ENCODE measurements at regions of chr4 and their contacts with region 1.

Region 1: DNA sequence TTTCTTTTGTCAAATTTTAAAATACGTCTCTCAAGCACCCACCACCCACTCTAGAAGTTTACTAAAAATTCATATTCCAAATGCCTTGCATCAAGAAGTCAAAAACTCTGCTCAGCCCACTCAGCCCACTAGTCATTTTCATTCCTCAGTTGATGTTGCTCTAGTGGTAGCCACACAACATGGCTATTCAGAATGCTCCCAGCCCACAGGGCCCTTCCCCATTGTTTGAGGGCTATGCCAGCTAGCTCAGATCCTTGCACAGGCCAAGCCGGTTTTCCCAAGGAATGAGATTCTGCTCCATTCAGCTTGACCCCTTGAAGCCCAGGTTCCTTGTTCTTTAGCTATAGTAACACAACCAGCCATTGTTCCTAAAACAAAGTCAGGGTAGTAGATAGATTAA is 297.5 kb upstream of the RASGEF1B start:
- DNase-seq: no peak
- H3K4me3 ChIP-seq: no peak overlapping the region
- H3K27ac ChIP-seq: no peak overlapping the region
- H3K4me1 ChIP-seq: no peaks in the 10 kb centered on the region
- H3K27me3 ChIP-seq: no peaks in the 10 kb centered on the region
- CTCF ChIP-seq: no peak
- EP300 ChIP-seq: no peak
- POLR2A ChIP-seq: no peak

Region 2: DNA sequence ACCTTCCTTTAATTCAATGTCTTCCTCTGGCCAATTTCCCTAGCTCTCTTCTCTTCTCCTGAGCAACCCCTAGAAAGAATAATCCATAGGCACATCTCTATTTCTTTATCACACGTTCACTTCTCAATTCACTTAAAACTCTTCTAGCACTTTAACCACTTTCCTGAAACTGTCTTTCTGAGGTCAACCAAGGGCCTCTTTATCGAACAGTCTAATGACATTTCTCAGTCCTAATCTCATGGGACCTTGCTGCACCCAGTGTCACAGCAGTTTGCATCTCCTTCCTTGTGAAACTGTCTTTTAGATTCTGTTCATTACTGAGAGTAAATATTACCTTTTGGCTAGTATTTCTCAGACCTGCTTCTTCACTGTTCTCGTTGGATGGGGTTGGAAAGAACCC is 12.3 kb before region 1 on chr4:
- in situ Hi-C with region 1: no loop called
- intact Hi-C with region 1: no loop called
- DNase-seq: no peak
- H3K4me3 ChIP-seq: no peak overlapping the region
- H3K27ac ChIP-seq: no peak overlapping the region
- H3K4me1 ChIP-seq: no peaks in the 10 kb centered on the region
- H3K27me3 ChIP-seq: no peaks in the 10 kb centered on the region
- CTCF ChIP-seq: no peak
- EP300 ChIP-seq: no peak
- POLR2A ChIP-seq: no peak

Region 3: DNA sequence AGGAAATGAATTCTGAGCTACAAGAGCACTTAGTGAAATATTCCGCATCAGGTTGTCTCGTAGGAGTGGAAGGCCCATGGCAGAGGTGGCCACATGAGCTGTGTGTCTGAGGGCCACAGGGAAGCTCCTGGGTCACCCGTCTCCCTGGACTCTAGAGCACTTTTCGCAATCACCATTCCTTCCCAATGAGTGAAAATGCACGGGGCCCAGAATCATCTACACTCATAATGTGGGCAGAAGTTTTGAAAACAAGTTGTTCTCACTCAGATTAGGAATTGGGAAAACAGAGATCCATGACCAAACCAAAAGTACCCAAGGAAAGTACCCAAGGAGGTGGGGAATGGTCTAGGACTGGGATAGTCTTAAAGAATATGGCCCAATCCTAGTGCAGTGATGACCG is 934.9 kb after region 1 on chr4:
- in situ Hi-C with region 1: no loop called
- intact Hi-C with region 1: no loop called
- DNase-seq: no peak
- H3K4me3 ChIP-seq: no peak overlapping the region
- H3K27ac ChIP-seq: no peak overlapping the region
- H3K4me1 ChIP-seq: peaks cover 0 to 9% (median 0%) of the 10 kb centered on the region in 4 donors
- H3K27me3 ChIP-seq: no peaks in the 10 kb centered on the region
- CTCF ChIP-seq: no peak
- EP300 ChIP-seq: no peak
- POLR2A ChIP-seq: no peak

Region 4: DNA sequence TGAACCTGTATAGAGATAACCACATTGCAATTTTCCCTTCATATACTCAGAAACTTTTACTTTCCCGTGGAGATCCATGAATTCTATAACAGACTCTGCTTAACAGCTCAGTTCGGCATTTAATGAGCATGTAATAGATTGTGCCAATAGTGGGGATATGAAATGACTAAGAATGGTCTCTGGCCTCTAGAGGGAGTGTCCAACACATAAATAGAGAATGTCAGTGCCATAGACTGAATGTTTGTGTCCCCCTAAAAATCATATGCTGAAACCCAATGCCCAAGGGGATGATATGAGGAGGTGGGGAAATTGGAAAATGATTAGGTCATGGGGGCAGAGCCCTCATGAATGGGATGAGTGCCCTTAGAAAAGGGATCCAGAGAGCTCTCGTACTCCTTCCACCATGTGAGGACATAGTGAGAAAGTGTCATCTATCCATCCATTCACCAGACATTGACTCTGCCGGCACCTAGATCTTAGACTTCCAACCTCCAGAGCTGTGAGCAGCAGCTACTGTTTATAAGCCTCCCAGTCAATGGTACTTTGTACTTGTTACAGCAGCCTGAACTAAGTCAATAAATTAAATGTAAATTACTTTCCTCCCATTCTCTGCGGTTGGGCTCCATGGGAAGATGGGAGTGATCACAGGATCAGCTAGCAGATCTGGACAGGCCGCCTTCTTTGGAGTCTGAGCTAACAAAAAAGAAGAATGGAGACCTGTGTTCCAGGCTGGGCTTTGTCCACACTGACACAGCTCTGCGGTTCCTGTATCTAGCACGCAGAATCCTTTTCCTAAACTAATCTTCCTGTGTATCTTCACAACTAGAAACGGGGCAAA is 1593.5 kb after region 1 on chr4:
- in situ Hi-C with region 1: no loop called
- intact Hi-C with region 1: loop called (anchors 5 kb)
- DNase-seq: peak; percentile 19
- H3K4me3 ChIP-seq: no peak overlapping the region
- H3K27ac ChIP-seq: no peak overlapping the region
- H3K4me1 ChIP-seq: peaks cover 0 to 4% (median 2%) of the 10 kb centered on the region in 4 donors
- H3K27me3 ChIP-seq: no peaks in the 10 kb centered on the region
- CTCF ChIP-seq: peak in 1 of 5 experiments; percentile 9
- EP300 ChIP-seq: no peak
- POLR2A ChIP-seq: no peak

Measured in transverse colon (tissue), 4 donors.